ENCODE measurements at regions of chr3 and their contacts with region 1.

Region 1: GRCh38 chr3:124559881-124560574 is 170.2 kb upstream of the UMPS start:
- DNase-seq: peak; percentile 74
- H3K4me3 Mint-ChIP-seq: no peak overlapping the region
- H3K27ac Mint-ChIP-seq: no peak overlapping the region
- H3K4me1 Mint-ChIP-seq: no peaks in the 10 kb centered on the region
- H3K27me3 Mint-ChIP-seq: peaks cover 35% of the 10 kb centered on the region

Region 2: DNA sequence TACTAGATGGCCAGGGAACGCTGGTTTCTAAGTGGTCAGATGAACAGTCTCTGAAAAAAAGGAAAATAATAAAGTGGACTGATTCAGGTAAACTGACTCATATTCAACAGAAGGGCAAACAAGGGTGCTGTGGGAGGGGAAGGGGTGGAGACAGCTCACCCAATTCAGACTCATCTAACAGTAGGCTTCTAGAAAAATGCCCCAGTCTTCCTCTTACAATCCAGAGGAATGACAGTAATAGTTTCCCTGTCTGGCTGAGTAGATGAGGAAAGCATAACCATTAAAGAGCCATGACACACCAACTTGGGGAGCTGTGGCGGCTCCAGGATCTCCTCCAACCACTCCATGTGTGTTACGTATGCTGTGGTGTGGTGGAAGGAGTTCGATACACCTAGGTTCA is 61.1 kb before region 1 on chr3:
- CTCF ChIA-PET with region 1: no interaction called
- POLR2A ChIA-PET with region 1: no interaction called
- intact Hi-C with region 1: no loop called
- DNase-seq: no peak
- H3K4me3 Mint-ChIP-seq: no peak overlapping the region
- H3K27ac Mint-ChIP-seq: no peak overlapping the region
- H3K4me1 Mint-ChIP-seq: no peaks in the 10 kb centered on the region
- H3K27me3 Mint-ChIP-seq: peaks cover 18% of the 10 kb centered on the region

Region 3: DNA sequence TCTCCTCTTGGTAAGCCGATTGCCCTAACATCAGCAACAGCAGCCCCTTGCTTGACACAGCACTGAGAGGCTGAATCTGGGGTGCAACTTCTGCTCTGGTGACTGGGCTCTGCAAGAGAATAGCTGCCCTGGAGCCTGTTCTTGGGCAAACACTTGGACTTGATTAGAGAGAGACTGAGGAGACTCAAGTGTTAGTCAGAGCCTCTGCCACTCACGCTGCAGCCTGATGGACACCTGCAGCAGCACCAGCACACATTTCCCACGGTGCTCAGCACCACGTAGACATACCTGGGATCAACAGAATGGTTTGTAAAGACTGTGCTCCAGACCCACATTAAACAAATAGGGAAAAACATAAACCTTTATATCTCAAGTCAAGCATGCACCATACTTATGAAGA is 134.5 kb after region 1 on chr3:
- CTCF ChIA-PET with region 1: interaction called, 258 read pairs
- POLR2A ChIA-PET with region 1: no interaction called
- intact Hi-C with region 1: loop called (anchors 1 kb)
- DNase-seq: no peak
- H3K4me3 Mint-ChIP-seq: no peak overlapping the region
- H3K27ac Mint-ChIP-seq: no peak overlapping the region
- H3K4me1 Mint-ChIP-seq: no peaks in the 10 kb centered on the region
- H3K27me3 Mint-ChIP-seq: no peaks in the 10 kb centered on the region

Measured in activated CD4-positive, alpha-beta memory T cell treated with anti-CD3 and anti-CD28 coated beads for 36 hours (primary cell).